CD4-positive, alpha-beta memory T cell (primary cell): ENCODE measurements at regions of chr7 and their contacts with region 1.

Region 1: GRCh38 chr7:150580638-150581394 is 13.6 kb downstream of the GIMAP4 start:
- DNase-seq: no peak
- H3K4me3 ChIP-seq: no peak overlapping the region
- H3K4me3 Mint-ChIP-seq: peak overlapping the region in 3 of 8 donors; percentile 26 to 33 (median 33)
- H3K27ac ChIP-seq: no peak overlapping the region
- H3K27ac Mint-ChIP-seq: peak overlapping the region; percentile 47 to 85 (median 68)
- H3K4me1 ChIP-seq: peaks cover 14% of the 10 kb centered on the region
- H3K4me1 Mint-ChIP-seq: peaks cover 22 to 81% (median 36%) of the 10 kb centered on the region in 4 donors
- H3K27me3 ChIP-seq: no peaks in the 10 kb centered on the region
- H3K27me3 Mint-ChIP-seq: no peaks in the 10 kb centered on the region

Region 2: DNA sequence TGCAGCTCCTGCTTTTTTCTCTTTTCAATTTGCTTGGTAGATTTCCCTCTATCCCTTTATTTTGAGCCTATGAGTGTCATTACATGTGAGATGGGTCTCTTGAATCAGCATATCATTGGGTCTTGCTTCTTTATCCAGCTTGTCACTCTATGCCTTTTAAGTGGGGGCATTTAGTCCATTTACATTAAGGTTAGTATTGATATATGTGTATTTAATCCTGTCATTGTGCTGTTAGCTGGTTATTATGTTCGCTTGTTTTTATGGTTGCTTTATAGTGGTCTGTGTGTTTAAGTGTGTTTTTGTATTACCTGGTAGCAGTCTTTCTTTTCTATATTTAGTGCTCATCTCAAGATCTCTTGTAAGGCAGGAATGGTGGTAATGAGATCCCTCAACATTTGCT is 49.1 kb before region 1 on chr7:
- CTCF ChIA-PET with region 1: no interaction called
- POLR2A ChIA-PET with region 1: no interaction called
- intact Hi-C with region 1: no loop called
- DNase-seq: no peak
- H3K4me3 ChIP-seq: no peak overlapping the region
- H3K4me3 Mint-ChIP-seq: peak overlapping the region in 1 of 8 donors; percentile 13
- H3K27ac ChIP-seq: no peak overlapping the region
- H3K27ac Mint-ChIP-seq: peak overlapping the region in 2 of 7 donors; percentile 49 to 65
- H3K4me1 ChIP-seq: no peaks in the 10 kb centered on the region
- H3K4me1 Mint-ChIP-seq: peaks cover 9 to 21% (median 16%) of the 10 kb centered on the region in 4 donors
- H3K27me3 ChIP-seq: no peaks in the 10 kb centered on the region
- H3K27me3 Mint-ChIP-seq: no peaks in the 10 kb centered on the region

Region 3: DNA sequence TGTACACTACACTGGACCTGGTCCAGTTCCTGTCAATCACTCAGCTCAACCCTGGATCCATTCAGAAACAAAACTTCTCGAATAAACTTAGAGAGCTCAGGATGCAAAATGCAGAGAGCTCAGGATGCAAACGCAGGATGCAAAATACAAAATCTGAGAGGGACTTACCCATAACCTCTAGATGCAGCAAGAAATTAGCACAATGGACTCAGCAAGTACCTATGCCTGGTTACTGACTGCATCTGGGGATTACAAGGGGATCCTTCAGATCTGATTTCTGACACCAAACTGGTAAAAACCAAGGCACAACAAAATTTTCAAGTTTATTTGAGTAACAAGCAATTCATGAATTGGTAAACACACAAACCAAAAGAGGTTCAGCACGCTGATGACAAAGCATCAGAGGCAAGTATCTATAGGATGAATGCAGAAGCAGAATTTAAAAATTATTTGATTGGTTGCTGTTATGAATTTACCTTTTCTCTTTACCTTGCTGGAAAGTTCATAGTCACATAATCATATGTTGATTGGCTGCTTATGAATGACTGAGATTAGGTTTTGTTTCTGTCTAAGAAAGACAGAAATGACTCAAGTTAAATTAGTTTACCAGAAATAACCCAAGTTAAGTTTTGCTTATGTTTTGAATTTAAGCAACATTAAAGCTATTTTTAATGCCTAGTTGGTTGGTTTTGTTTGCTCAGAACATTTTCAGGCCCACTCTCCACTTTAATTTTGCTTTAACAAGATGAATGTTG is 40.0 kb after region 1 on chr7:
- CTCF ChIA-PET with region 1: no interaction called
- POLR2A ChIA-PET with region 1: interaction called, 5 read pairs
- intact Hi-C with region 1: loop called (anchors 5 kb)
- DNase-seq: no peak
- H3K4me3 ChIP-seq: no peak overlapping the region
- H3K4me3 Mint-ChIP-seq: peak overlapping the region; percentile 2 to 63 (median 44)
- H3K27ac ChIP-seq: no peak overlapping the region
- H3K27ac Mint-ChIP-seq: peak overlapping the region; percentile 70 to 92 (median 86)
- H3K4me1 ChIP-seq: peaks cover 41% of the 10 kb centered on the region
- H3K4me1 Mint-ChIP-seq: peaks cover 42 to 61% (median 54%) of the 10 kb centered on the region in 4 donors
- H3K27me3 ChIP-seq: no peaks in the 10 kb centered on the region
- H3K27me3 Mint-ChIP-seq: no peaks in the 10 kb centered on the region